Left cardiac atrium (tissue), 4 donors: ENCODE measurements at regions of chr10 and their contacts with region 1.

Region 1: DNA sequence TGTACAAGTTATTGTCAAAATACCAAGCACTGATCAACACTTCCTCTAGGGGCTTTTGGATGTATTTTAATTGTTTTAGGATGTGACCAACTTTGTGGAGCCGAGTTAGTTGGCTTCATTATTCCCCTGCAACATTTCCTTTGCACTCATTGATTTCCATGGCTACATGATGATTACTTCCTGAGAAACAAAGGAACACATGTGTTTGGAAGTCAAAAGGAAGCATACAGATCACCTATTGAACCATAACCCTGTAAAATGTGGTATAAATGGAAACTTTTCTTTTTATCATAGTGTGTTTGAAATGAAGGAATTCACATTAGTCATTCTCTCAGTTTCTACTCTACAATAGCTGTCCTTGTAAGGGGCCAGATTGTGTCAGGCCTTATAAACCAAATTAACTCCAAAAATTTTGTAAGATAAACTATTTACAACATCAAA is 32.2 kb upstream of the EXOC6 start:
- DNase-seq: no peak
- ATAC-seq: peak in 1 of 2 donors; percentile 50

Region 2: DNA sequence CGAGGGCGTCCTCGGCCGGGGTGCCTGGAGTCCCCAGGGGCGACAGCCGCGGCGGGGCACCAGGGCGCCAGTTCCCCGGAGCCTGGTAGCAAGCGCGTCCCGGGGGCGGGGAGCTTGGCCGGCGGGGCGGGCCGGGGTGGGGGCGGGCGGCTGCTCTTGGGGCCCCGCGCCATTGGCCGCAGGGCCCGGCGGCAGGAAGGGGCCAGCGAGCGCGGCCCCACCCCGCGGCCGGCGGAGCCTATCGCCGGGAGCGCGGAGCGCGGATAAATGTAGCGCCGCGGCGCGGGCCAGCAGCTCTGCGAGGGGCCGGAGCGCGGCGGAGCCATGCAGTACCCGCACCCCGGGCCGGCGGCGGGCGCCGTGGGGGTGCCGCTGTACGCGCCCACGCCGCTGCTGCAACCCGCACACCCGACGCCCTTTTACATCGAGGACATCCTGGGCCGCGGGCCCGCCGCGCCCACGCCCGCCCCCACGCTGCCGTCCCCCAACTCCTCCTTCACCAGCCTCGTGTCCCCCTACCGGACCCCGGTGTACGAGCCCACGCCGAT is 126.4 kb before region 1 on chr10 and contains the start of gene HHEX:
- intact Hi-C with region 1: loop called in 1 of 2 experiments (anchors 10 kb)
- DNase-seq: peak; percentile 67
- ATAC-seq: peak; percentile 77 to 88
- total RNA-seq, gene HHEX: 3.7 to 9.0 TPM

Region 3: GRCh38 chr10:92942284-92942683 is 126.2 kb after region 1 on chr10:
- intact Hi-C with region 1: no loop called
- DNase-seq: no peak
- ATAC-seq: no peak

Region 4: DNA sequence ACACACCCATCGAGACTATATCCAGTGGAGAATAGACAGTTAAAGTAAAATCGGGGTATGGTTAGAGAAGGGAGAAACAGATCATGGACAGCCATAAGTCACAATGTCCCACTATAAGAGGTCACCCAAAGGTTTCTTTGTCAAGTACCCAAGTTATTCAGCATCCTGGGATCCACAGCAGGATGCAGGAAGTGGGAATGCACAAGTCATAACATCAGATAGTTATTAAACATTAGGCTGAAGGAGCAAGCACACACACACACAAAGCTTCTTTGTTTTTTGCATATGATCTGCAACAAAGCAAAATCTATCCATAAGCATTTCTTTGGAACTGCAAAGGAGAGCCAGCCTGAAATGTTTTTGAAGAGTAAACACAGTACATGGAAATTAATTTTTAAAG is 1435.0 kb after region 1 on chr10:
- intact Hi-C with region 1: no loop called
- DNase-seq: no peak
- ATAC-seq: no peak